ENCODE measurements at regions of chr6 and their contacts with region 1.

Region 1: GRCh38 chr6:87832025-87832825 is 130.2 kb upstream of the AKIRIN2 start:
- DNase-seq: peak; percentile 43
- CTCF ChIP-seq: peak; percentile 52

Region 2: GRCh38 chr6:87922947-87923330 is 90.7 kb after region 1 on chr6:
- in situ Hi-C with region 1: loop called (anchors 5 kb)
- DNase-seq: peak; percentile 57
- CTCF ChIP-seq: no peak

Region 3: DNA sequence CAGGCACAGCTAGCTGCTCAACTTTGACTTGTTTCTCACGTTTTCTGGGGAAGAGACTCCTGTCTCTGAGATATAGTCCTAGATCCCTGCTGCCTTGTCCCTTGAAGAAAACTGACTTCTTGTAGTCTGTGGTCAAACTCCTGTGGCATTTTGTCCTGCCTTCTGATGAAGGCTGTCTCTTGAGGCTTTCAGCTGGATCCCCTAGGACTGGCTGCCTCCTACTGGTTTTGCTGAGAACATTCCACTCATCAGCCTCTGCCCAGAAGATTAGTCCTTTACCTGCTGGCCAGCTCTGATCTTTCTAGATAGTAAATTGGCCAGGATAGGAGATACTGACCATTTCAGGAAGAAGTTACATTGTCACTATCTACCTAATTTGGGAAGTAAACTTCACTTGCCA is 405.8 kb after region 1 on chr6:
- in situ Hi-C with region 1: loop called (anchors 10 kb)
- DNase-seq: peak; percentile 58
- CTCF ChIP-seq: peak; percentile 79

Region 4: DNA sequence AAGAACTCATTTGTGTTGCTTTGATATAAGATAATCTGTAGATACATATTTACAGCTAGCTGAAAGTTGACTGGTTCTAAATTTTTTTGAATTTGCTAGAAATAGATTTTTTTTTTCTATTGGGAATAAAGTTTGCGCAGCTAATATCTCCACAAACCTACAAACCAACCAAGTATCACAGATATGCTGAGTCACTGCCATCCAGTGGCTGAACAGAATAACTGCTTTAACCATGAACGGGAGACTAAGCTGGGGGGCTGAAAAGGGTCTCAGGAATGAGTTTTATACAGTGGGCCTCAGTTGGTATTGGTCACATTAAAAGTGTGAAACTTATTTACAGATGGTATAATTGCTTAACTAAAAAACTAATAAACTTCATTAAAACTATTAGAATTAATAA is 660.6 kb after region 1 on chr6:
- in situ Hi-C with region 1: loop called (anchors 25 kb)
- DNase-seq: no peak
- CTCF ChIP-seq: peak; percentile 62